Endothelial cell of umbilical vein (primary cell): ENCODE measurements at regions of chr10 and their contacts with region 1.

Region 1: GRCh38 chr10:16644147-16644546 is 122.5 kb upstream of the C1QL3 start:
- DNase-seq: peak; percentile 77
- H3K4me3 ChIP-seq: no peak overlapping the region
- H3K27ac ChIP-seq: peak overlapping the region; percentile 21
- H3K4me1 ChIP-seq: peaks cover 15% of the 10 kb centered on the region
- H3K27me3 ChIP-seq: no peaks in the 10 kb centered on the region
- CTCF ChIP-seq: no peak
- POLR2A ChIP-seq: no peak

Region 2: GRCh38 chr10:16392531-16393069 is 251.5 kb before region 1 on chr10:
- CTCF ChIA-PET with region 1: no interaction called
- POLR2A ChIA-PET with region 1: no interaction called
- dilution Hi-C with region 1: no loop called
- intact Hi-C with region 1: no loop called
- DNase-seq: no peak
- H3K4me3 ChIP-seq: no peak overlapping the region
- H3K27ac ChIP-seq: no peak overlapping the region
- H3K4me1 ChIP-seq: no peaks in the 10 kb centered on the region
- H3K27me3 ChIP-seq: no peaks in the 10 kb centered on the region
- CTCF ChIP-seq: no peak
- POLR2A ChIP-seq: no peak

Region 3: GRCh38 chr10:16673443-16673842 is 29.3 kb after region 1 on chr10:
- CTCF ChIA-PET with region 1: no interaction called
- POLR2A ChIA-PET with region 1: no interaction called
- dilution Hi-C with region 1: no loop called
- intact Hi-C with region 1: loop called (anchors 1 kb)
- DNase-seq: no peak
- H3K4me3 ChIP-seq: no peak overlapping the region
- H3K27ac ChIP-seq: no peak overlapping the region
- H3K4me1 ChIP-seq: no peaks in the 10 kb centered on the region
- H3K27me3 ChIP-seq: no peaks in the 10 kb centered on the region
- CTCF ChIP-seq: no peak
- POLR2A ChIP-seq: no peak

Region 4: DNA sequence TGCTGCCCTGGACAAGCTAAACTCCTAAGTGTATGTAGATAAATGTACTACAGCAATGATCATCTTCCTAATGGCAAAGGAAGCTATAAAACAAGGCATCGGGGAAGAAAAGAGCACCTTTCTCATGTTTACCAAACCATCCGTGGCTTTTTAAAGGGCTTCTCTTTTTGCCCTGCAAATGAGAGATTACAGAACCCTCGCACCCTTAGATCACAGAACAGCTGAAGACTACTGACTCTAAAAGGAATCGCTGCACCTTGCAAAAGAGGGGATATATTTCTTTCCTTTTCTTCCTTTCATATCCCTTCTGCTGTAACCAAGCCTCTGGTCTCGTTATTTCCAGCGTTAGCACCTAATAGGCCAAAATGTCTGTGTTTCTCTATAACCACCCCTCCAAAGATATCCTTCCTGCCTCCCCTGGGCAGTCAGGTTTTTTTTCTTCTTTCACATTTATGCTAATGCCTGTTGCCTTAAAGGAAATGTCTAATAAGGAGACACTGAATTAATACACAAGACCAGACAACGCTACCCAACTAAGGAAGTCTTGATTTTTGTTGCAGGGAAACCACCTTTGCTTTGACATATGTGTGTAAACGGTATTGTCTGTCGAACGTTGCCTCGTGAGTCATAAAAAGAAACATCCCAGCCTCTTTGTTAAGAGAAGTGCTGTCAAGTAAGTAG is 799.7 kb after region 1 on chr10:
- CTCF ChIA-PET with region 1: no interaction called
- POLR2A ChIA-PET with region 1: no interaction called
- dilution Hi-C with region 1: no loop called
- intact Hi-C with region 1: no loop called
- DNase-seq: peak; percentile 57
- H3K4me3 ChIP-seq: no peak overlapping the region
- H3K27ac ChIP-seq: no peak overlapping the region
- H3K4me1 ChIP-seq: peaks cover 8% of the 10 kb centered on the region
- H3K27me3 ChIP-seq: no peaks in the 10 kb centered on the region
- CTCF ChIP-seq: no peak
- POLR2A ChIP-seq: no peak